ENCODE measurements at regions of chr19 and their contacts with region 1.

Region 1: GRCh38 chr19:36214386-36215275 is at the starts of genes ZNF146 and ZNF565:
- DNase-seq: peak; percentile 99
- H3K4me3 Mint-ChIP-seq: no peak within 1 kb of the TSS
- H3K27ac Mint-ChIP-seq: no peak within 1 kb of the TSS
- H3K4me1 Mint-ChIP-seq: peaks cover 5% of the 10 kb centered on the region
- H3K27me3 Mint-ChIP-seq: no peaks in the 10 kb centered on the region
- total RNA-seq, gene ZNF146: 84.6 and 90.3 TPM in 2 replicates
- total RNA-seq, gene ZNF565: 1.6 and 2.2 TPM in 2 replicates

Region 2: GRCh38 chr19:36139473-36140303 is 74.9 kb before region 1 on chr19 and contains the start of gene CAPNS1:
- intact Hi-C with region 1: loop called (anchors 1 kb)
- DNase-seq: peak; percentile 98
- H3K4me3 Mint-ChIP-seq: peak within 1 kb of the TSS; percentile 89
- H3K27ac Mint-ChIP-seq: peak within 1 kb of the TSS; percentile 95
- H3K4me1 Mint-ChIP-seq: peaks cover 23% of the 10 kb centered on the region
- H3K27me3 Mint-ChIP-seq: no peaks in the 10 kb centered on the region
- total RNA-seq, gene CAPNS1: 351 and 362 TPM in 2 replicates

Region 3: GRCh38 chr19:36528194-36528920 is 313.7 kb after region 1 on chr19 and contains the start of gene ZNF260:
- intact Hi-C with region 1: loop called (anchors 1 kb)
- DNase-seq: peak; percentile 97
- H3K4me3 Mint-ChIP-seq: peak within 1 kb of the TSS; percentile 96
- H3K27ac Mint-ChIP-seq: peak within 1 kb of the TSS; percentile 95
- H3K4me1 Mint-ChIP-seq: peaks cover 17% of the 10 kb centered on the region
- H3K27me3 Mint-ChIP-seq: no peaks in the 10 kb centered on the region
- total RNA-seq, gene ZNF260: 6.7 and 8.0 TPM in 2 replicates

Region 4: DNA sequence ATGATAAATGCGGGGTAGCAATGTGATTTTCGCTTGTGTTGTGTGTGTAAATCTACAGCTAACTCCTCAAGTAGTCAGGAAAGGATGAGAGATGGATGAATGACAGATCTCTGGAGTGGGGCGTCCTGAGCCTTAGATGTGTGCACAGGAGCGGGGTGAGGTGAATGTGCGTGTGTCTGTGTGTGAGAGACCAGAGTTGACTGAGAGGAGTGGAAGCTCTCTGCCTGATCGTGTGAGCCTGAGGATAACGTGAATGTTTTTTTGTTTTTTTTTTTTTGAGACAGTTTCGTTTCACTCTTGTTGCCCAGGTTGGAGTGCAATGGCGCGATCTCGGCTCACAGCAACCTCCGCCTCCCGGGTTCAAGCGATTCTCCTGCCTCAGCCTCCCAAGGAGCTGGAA is 451.2 kb after region 1 on chr19:
- intact Hi-C with region 1: loop called (anchors 1 kb)
- DNase-seq: no peak
- H3K4me3 Mint-ChIP-seq: peak overlapping the region; percentile 98
- H3K27ac Mint-ChIP-seq: peak overlapping the region; percentile 76
- H3K4me1 Mint-ChIP-seq: peaks cover 23% of the 10 kb centered on the region
- H3K27me3 Mint-ChIP-seq: no peaks in the 10 kb centered on the region

Region 5: DNA sequence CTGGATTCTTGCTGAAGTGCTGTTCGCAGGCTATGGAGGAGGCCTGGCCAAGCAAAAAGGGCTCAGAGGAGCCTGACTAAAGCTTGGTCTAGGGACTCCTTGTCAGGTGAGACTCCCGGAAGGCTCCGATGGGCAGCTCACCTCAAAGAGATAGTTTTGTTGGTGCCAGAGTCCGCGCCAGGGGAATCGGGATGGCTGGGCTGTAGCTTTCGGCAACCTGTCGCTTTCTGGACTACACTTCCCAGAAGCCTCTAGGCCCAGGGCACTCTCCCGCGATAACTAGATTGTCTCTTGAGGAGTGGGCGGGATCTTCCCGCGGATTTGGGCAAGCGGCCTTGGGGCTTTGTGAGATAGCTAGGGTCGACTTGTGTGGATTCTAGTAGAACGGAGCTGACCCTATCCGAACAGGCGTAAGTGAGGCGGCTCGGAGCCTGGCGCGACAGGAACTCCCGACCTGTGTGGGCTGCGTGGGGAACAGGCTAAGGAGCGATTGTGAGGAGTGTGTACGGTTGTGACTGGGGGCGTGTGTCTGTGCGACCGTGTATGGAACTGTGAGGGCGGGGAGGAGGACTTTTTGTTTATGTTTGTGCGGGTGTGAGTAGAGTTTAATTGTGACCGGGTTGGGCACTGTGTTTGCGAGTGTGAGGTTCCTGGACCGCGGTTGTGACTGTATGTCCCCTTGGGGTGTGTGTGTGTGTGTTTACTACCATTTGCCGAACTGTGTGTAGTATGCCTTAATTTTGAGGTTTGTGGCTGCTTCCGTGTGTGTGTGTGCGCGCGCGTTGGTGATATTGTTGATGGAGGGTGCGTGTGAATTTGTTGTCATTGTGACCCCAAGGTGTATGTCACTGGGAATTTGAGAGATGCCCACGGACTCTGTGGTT is 636.2 kb after region 1 on chr19 and contains the start of gene ZNF345:
- intact Hi-C with region 1: loop called (anchors 2 kb)
- DNase-seq: peak; percentile 96
- H3K4me3 Mint-ChIP-seq: no peak within 1 kb of the TSS
- H3K27ac Mint-ChIP-seq: no peak within 1 kb of the TSS
- H3K4me1 Mint-ChIP-seq: peaks cover 2% of the 10 kb centered on the region
- H3K27me3 Mint-ChIP-seq: no peaks in the 10 kb centered on the region
- total RNA-seq, gene ZNF345: 2.8 and 4.2 TPM in 2 replicates

Region 6: GRCh38 chr19:37217855-37218591 is 1003.4 kb after region 1 on chr19 and contains the start of gene ZNF383:
- intact Hi-C with region 1: loop called (anchors 10 kb)
- DNase-seq: peak; percentile 95
- H3K4me3 Mint-ChIP-seq: peak within 1 kb of the TSS; percentile 97
- H3K27ac Mint-ChIP-seq: peak within 1 kb of the TSS; percentile 94
- H3K4me1 Mint-ChIP-seq: peaks cover 16% of the 10 kb centered on the region
- H3K27me3 Mint-ChIP-seq: no peaks in the 10 kb centered on the region
- total RNA-seq, gene ZNF383: 6.4 and 8.6 TPM in 2 replicates